SK-N-SH (cell line): ENCODE measurements at regions of chr6 and their contacts with region 1.

Region 1: GRCh38 chr6:159125014-159125609 is 44.1 kb upstream of the FNDC1 start:
- DNase-seq: no peak
- H3K4me3 ChIP-seq: no peak overlapping the region
- H3K27ac ChIP-seq: no peak overlapping the region
- H3K4me1 ChIP-seq: peaks cover 0 to 3% of the 10 kb centered on the region in 2 experiments; a peak in 1 of 4 replicates
- H3K27me3 ChIP-seq: no peaks in the 10 kb centered on the region; the same call in 1 of the 2 replicates
- CTCF ChIP-seq: peak; percentile 54
- EP300 ChIP-seq: no peak
- RAD21 ChIP-seq: no peak

Region 2: DNA sequence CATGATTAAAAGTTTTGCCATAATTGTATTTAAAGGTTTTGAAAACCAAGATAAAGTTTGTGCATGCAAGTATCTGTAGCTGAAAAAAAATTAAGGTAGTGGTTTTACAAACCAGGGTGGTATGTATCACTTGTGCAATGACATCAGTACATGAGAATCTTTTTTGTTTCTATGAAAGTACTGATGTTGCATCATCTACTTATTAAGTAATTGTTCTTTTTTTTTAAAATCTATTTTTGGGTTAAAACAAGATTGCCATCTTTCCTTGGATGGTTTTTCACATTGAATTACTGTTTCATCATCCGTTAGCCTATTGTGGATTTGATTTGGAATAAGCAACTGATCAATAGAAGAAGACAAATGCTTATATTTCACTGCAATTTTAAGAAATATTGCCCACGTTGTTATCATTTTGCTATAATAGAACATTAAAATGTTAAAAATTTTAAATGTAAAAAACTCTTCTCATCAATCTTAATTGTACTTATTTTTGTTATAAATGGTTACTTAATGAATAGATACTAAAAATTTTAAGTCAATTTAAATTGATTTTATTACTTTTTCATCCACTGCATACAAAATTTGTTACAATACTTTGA is 40.5 kb before region 1 on chr6:
- CTCF ChIA-PET with region 1: no interaction called
- POLR2A ChIA-PET with region 1: no interaction called
- DNase-seq: no peak
- H3K4me3 ChIP-seq: no peak overlapping the region
- H3K27ac ChIP-seq: no peak overlapping the region
- H3K4me1 ChIP-seq: no peaks in the 10 kb centered on the region
- H3K27me3 ChIP-seq: no peaks in the 10 kb centered on the region
- CTCF ChIP-seq: no peak
- EP300 ChIP-seq: no peak
- RAD21 ChIP-seq: no peak

Region 3: GRCh38 chr6:159110013-159110412 is 15.1 kb before region 1 on chr6:
- CTCF ChIA-PET with region 1: interaction called, 19 read pairs
- POLR2A ChIA-PET with region 1: no interaction called
- DNase-seq: peak; percentile 55
- H3K4me3 ChIP-seq: no peak overlapping the region; a peak in 1 of 4 replicates
- H3K27ac ChIP-seq: no peak overlapping the region
- H3K4me1 ChIP-seq: no peaks in the 10 kb centered on the region
- H3K27me3 ChIP-seq: no peaks in the 10 kb centered on the region; the same call in 1 of the 2 replicates
- CTCF ChIP-seq: peak; percentile 62
- EP300 ChIP-seq: no peak
- RAD21 ChIP-seq: peak; percentile 50